Transverse colon (tissue), 4 donors: ENCODE measurements at regions of chr2 and their contacts with region 1.

Region 1: GRCh38 chr2:161992526-161992925 is 81.5 kb downstream of the DPP4 start:
- DNase-seq: no peak
- H3K4me3 ChIP-seq: no peak overlapping the region
- H3K27ac ChIP-seq: no peak overlapping the region
- H3K4me1 ChIP-seq: peaks cover 0 to 6% (median 0%) of the 10 kb centered on the region in 4 donors
- H3K27me3 ChIP-seq: no peaks in the 10 kb centered on the region
- CTCF ChIP-seq: no peak
- EP300 ChIP-seq: no peak
- POLR2A ChIP-seq: no peak

Region 2: GRCh38 chr2:161919873-161920272 is 72.7 kb before region 1 on chr2:
- in situ Hi-C with region 1: no loop called
- intact Hi-C with region 1: no loop called
- DNase-seq: no peak
- H3K4me3 ChIP-seq: no peak overlapping the region
- H3K27ac ChIP-seq: no peak overlapping the region
- H3K4me1 ChIP-seq: no peaks in the 10 kb centered on the region
- H3K27me3 ChIP-seq: no peaks in the 10 kb centered on the region
- CTCF ChIP-seq: no peak
- EP300 ChIP-seq: no peak
- POLR2A ChIP-seq: no peak

Region 3: GRCh38 chr2:162343824-162344616 is 351.5 kb after region 1 on chr2 and contains the start of gene GCA:
- in situ Hi-C with region 1: loop called in 1 of 4 experiments (anchors 25 kb)
- intact Hi-C with region 1: no loop called
- DNase-seq: peak; percentile 98
- H3K4me3 ChIP-seq: peak within 1 kb of the TSS; percentile 44 to 90 (median 76)
- H3K27ac ChIP-seq: peak within 1 kb of the TSS; percentile 81 to 90 (median 88)
- H3K4me1 ChIP-seq: peaks cover 0 to 12% (median 4%) of the 10 kb centered on the region in 4 donors
- H3K27me3 ChIP-seq: no peaks in the 10 kb centered on the region
- CTCF ChIP-seq: peak in 2 of 5 experiments; percentile 19 to 38
- EP300 ChIP-seq: no peak
- POLR2A ChIP-seq: peak; percentile 70
- total RNA-seq, gene GCA: 7.5 to 25.8 (median 18.4) TPM in 3 of 4 donors, not detected in the other